ENCODE measurements at regions of chr20 and their contacts with region 1.

Region 1: GRCh38 chr20:4592316-4593148 is 129.2 kb upstream of the PRND start:
- DNase-seq: peak; percentile 67
- ATAC-seq: peak; percentile 91

Region 2: GRCh38 chr20:4108495-4109306 is 483.8 kb before region 1 on chr20:
- intact Hi-C with region 1: loop called (anchors 5 kb)
- DNase-seq: peak; percentile 51
- ATAC-seq: peak; percentile 91

Region 3: DNA sequence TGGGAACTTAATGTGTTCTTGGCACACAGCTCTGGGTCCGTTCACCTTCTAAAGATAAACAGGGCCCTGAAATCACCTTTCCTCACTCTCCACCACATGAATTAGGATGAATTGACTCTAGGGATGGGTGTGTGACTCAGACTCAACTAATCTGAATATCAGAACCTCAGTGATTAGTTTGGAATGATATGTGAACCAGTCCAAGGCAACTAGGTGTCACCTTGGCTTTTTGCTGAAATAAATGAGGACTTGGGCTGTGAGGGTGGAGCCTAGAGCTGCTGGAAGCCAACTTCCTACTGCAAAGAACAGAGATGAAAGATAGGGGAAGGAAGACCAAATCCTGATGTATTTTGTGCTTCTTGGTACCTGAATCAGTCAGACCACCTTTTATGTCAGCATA is 445.2 kb before region 1 on chr20:
- intact Hi-C with region 1: no loop called
- DNase-seq: no peak
- ATAC-seq: no peak

Region 4: DNA sequence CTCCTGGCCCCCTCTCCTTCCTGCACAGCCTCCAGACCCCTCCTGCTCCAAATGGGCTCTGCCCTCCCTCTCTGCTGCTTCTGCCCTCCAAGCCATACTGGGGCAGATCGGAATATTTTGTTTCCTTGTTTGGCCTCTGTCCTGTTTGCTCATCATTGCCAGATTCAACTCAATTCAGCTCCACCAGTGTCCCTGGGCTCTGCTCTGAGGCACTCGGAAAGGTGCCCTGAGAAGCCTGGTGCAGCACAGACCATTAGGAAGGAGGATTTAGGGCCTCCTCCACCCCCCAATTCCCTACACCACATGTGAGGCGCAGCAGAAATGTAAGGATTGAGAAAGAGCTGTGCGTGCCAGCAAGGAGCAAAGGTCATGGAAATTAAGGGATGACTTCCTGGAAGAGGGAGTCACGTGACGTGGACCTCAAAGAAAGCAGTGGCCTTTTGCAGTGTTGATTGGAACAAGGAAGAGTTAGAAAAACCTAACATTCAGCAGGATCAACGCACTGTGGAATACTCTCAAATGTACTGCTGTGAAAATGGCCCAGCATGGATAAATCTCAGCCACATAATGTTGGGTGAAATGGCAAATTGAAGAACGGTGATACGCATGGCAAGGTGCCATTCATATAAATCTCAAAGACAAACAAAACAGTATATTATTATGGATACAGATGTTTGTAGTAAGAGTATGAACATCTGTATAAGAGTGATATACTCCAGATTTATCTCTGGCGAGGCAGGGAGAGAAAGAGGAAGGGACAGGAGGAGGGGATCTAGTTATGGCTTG is 347.6 kb before region 1 on chr20:
- intact Hi-C with region 1: loop called (anchors 2 kb)
- DNase-seq: no peak
- ATAC-seq: no peak

Region 5: GRCh38 chr20:4666001-4666479 is 73.5 kb after region 1 on chr20:
- intact Hi-C with region 1: no loop called
- DNase-seq: no peak
- ATAC-seq: peak; percentile 57

Region 6: GRCh38 chr20:5279661-5280060 is 687.1 kb after region 1 on chr20:
- intact Hi-C with region 1: no loop called
- DNase-seq: no peak
- ATAC-seq: no peak

Measured in Right ventricle myocardium superior (tissue), 1 donor.